CD8-positive, alpha-beta T cell (primary cell): ENCODE measurements at regions of chr16 and their contacts with region 1.

Region 1: GRCh38 chr16:2142942-2143877 is 5.2 kb upstream of the RAB26 start:
- DNase-seq: no peak
- ATAC-seq: no peak
- H3K4me3 ChIP-seq: no peak overlapping the region
- H3K4me3 Mint-ChIP-seq: no peak overlapping the region
- H3K27ac ChIP-seq: no peak overlapping the region
- H3K27ac Mint-ChIP-seq: no peak overlapping the region
- H3K4me1 ChIP-seq: peaks cover 3% of the 10 kb centered on the region
- H3K4me1 Mint-ChIP-seq: peaks cover 8% of the 10 kb centered on the region
- H3K27me3 ChIP-seq: no peaks in the 10 kb centered on the region
- H3K27me3 Mint-ChIP-seq: no peaks in the 10 kb centered on the region
- CTCF ChIP-seq: no peak

Region 2: DNA sequence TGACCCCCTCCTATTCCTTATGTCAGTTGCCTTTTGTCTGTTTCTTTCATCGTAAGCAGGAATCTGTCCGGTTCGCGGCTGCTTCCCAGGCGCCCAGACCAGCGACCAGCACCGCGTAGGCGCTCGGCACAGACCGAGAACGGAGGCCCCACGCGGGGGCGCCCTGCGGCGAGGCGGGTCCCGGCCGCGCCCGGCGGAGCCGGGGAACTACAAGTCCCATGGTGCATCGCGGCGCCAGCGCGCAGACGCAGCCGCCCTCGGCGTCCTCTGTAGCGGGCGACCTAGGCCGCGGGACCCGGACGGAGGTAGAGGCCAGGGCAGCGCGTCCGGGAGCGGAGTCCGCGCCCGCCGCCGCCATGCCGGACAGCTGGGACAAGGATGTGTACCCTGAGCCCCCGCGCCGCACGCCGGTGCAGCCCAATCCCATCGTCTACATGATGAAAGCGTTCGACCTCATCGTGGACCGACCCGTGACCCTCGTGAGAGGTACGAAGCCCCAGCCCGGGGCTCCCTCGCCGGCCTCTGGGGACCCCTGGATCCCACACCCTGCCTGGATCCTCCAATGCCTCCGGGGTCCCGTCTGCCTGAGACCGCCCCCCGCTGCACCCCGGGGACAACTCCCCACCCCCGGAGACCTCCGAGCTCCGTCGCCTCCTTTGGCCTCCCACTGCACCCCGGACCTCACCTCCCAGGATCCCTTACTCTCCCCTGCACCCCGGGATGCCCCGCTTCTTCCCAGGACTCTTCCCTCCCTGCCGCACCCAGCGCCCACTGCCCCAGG is 183.8 kb before region 1 on chr16 and contains the start of gene NDUFB10:
- CTCF ChIA-PET with region 1: interaction called, 3 read pairs
- POLR2A ChIA-PET with region 1: interaction called, 5 read pairs
- intact Hi-C with region 1: loop called in 1 of 2 experiments (anchors 2 kb)
- DNase-seq: peak; percentile 80 to 96 (median 92)
- ATAC-seq: peak; percentile 86
- H3K4me3 ChIP-seq: peak within 1 kb of the TSS; percentile 91 to 95
- H3K4me3 Mint-ChIP-seq: peak within 1 kb of the TSS; percentile 90
- H3K27ac ChIP-seq: peak within 1 kb of the TSS; percentile 75 to 80
- H3K27ac Mint-ChIP-seq: peak within 1 kb of the TSS; percentile 89
- H3K4me1 ChIP-seq: peaks cover 39% of the 10 kb centered on the region
- H3K4me1 Mint-ChIP-seq: peaks cover 39% of the 10 kb centered on the region
- H3K27me3 ChIP-seq: no peaks in the 10 kb centered on the region
- H3K27me3 Mint-ChIP-seq: no peaks in the 10 kb centered on the region
- CTCF ChIP-seq: peak; percentile 59
- total RNA-seq, gene NDUFB10: 36.2 to 38.4 TPM

Region 3: DNA sequence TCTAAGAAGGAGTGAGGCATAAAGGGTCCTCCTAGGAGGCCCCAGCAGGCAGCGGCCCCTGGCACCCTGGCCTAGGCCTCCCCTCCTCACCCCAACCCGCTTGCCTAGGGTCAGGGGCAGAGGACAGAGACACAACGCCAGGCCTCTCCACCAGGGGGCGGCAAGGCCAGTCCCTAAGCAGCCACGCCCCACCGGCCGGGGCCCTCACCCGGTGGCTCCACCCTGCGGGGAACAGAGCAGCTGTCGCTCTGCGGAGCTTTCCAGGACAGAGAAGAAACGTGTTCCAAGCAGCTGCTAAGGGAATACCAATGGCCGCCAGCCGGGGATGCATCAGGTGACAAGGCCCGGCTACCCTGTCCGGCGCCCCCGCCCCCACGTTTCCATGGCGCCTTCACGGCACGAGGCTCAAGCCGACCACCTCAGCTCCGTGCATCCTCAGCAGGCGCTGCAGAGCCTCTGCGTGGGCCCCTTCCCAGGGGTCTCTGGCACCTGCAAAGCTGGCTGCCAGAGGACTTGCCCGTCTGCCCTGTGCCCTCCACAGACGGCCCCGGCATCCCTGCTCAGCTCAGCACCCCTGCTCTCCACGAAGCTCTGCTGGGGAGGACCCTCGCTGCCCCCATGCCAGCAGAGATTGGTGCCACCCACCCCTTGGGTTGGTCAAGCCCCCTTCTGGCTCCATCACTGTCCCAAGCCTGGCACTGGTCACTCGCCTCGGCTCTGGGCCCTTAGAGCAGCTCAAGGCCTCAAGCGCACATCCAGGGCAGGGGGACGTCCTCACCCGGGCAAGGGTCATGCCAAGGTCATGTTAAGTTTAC is 139.2 kb before region 1 on chr16:
- CTCF ChIA-PET with region 1: interaction called, 27 read pairs
- POLR2A ChIA-PET with region 1: interaction called, 4 read pairs
- intact Hi-C with region 1: no loop called
- DNase-seq: peak; percentile 69 to 91 (median 86)
- ATAC-seq: peak; percentile 98
- H3K4me3 ChIP-seq: no peak overlapping the region
- H3K4me3 Mint-ChIP-seq: no peak overlapping the region
- H3K27ac ChIP-seq: no peak overlapping the region
- H3K27ac Mint-ChIP-seq: no peak overlapping the region
- H3K4me1 ChIP-seq: peaks cover 50% of the 10 kb centered on the region
- H3K4me1 Mint-ChIP-seq: peaks cover 36% of the 10 kb centered on the region
- H3K27me3 ChIP-seq: no peaks in the 10 kb centered on the region
- H3K27me3 Mint-ChIP-seq: no peaks in the 10 kb centered on the region
- CTCF ChIP-seq: peak; percentile 67

Region 4: GRCh38 chr16:2023098-2023925 is 119.9 kb before region 1 on chr16:
- CTCF ChIA-PET with region 1: interaction called, 68 read pairs
- POLR2A ChIA-PET with region 1: interaction called, 8 read pairs
- intact Hi-C with region 1: loop called in 1 of 2 experiments (anchors 1 kb)
- DNase-seq: peak; percentile 88 to 100 (median 95)
- ATAC-seq: peak; percentile 95
- H3K4me3 ChIP-seq: peak overlapping the region; percentile 37 to 43
- H3K4me3 Mint-ChIP-seq: peak overlapping the region; percentile 69
- H3K27ac ChIP-seq: peak overlapping the region; percentile 24 to 70
- H3K27ac Mint-ChIP-seq: peak overlapping the region; percentile 70
- H3K4me1 ChIP-seq: peaks cover 32% of the 10 kb centered on the region
- H3K4me1 Mint-ChIP-seq: peaks cover 21% of the 10 kb centered on the region
- H3K27me3 ChIP-seq: peaks cover 0 to 22% of the 10 kb centered on the region in 2 experiments
- H3K27me3 Mint-ChIP-seq: peaks cover 17% of the 10 kb centered on the region
- CTCF ChIP-seq: peak; percentile 89

Region 5: DNA sequence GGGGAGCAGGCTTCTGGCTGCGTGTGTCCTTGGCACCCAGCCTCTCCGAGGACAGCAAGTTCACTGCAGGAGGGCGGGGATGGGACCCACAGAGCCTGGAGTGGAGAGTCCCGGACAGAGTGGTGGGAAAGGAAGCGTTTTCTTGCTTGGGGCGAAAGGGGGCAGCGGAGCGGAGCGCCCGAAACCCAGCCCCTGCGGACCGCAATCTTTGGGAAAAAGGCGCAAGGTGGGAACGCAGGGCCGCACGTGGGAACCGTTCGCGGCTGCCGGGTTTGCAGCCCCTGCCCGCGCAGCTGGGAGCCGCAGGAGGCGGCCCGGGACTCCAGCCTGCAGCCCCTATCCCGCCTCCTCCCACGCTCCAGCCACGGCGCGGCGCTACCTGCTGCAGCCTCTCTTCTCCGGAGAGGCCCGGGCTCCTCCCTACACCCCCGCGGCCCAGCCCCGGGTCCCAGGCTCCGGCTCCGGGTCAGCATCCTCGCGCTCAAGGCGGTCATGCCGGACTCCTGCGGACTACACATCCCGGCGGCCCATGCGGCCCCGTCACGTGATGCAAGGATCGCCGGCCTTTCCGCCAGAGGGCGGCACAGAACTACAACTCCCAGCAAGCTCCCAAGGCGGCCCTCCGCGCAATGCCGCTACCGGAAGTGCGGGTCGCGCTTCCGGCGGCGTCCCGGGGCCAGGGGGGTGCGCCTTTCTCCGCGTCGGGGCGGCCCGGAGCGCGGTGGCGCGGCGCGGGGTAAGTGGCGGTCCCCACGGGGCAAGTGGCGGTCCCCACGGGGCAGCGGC is 95.7 kb before region 1 on chr16 and contains the starts of genes NTHL1 and TSC2:
- CTCF ChIA-PET with region 1: interaction called, 19 read pairs
- POLR2A ChIA-PET with region 1: interaction called, 3 read pairs
- intact Hi-C with region 1: loop called (anchors 1 kb)
- DNase-seq: peak; percentile 82 to 96 (median 92)
- ATAC-seq: peak; percentile 89
- H3K4me3 ChIP-seq: peak within 1 kb of the TSS; percentile 90 to 93
- H3K4me3 Mint-ChIP-seq: peak within 1 kb of the TSS; percentile 91
- H3K27ac ChIP-seq: peak within 1 kb of the TSS; percentile 60 to 64
- H3K27ac Mint-ChIP-seq: peak within 1 kb of the TSS; percentile 62
- H3K4me1 ChIP-seq: peaks cover 17% of the 10 kb centered on the region
- H3K4me1 Mint-ChIP-seq: peaks cover 24% of the 10 kb centered on the region
- H3K27me3 ChIP-seq: no peaks in the 10 kb centered on the region
- H3K27me3 Mint-ChIP-seq: no peaks in the 10 kb centered on the region
- CTCF ChIP-seq: peak; percentile 39
- total RNA-seq, gene NTHL1: 1.7 to 2.0 TPM
- total RNA-seq, gene TSC2: 76.2 to 84.1 TPM